ENCODE measurements at regions of chr4 and their contacts with region 1.

Region 1: DNA sequence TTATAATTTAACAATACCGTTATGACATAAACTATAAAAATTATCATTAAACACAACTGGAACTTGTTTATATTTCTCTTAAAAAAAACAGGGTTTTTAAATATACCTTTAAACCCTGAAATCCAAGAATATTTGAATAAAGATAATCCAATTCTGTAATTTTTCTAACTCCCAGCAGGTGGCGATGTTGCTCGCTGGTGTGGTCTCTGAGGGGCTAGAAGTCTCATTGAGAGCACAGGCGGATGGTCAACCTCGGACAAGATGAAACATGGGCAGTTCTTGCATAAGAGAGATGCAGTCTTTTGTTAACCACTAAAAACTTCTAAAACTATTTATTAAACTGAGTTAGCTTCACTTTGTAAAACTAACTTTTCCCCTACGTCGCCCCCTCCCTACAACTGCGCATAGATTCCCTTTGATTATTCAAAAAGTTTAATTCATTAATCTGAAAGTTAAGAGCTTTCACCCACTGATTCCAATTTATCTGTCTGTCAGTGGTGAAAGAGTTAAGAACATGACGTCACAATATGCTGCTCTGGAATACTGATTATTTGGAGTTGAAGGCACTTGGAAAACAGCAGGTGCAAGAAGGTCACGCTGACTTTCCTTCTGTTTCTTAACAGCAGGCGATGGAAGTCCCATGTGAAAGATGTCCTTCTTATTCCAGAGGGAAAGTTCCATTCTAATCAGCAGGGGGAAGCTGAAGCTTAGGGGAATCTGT is 29.5 kb downstream of the DMP1 start:
- DNase-seq: peak; percentile 28 to 49 (median 43)
- H3K4me3 ChIP-seq: no peak overlapping the region
- H3K4me3 Mint-ChIP-seq: no peak overlapping the region
- H3K27ac ChIP-seq: no peak overlapping the region
- H3K27ac Mint-ChIP-seq: no peak overlapping the region
- H3K4me1 ChIP-seq: no peaks in the 10 kb centered on the region
- H3K4me1 Mint-ChIP-seq: no peaks in the 10 kb centered on the region
- H3K27me3 ChIP-seq: no peaks in the 10 kb centered on the region
- H3K27me3 Mint-ChIP-seq: peaks cover 0 to 2% (median 1%) of the 10 kb centered on the region in 3 donors
- CTCF ChIP-seq: peak; percentile 94

Region 2: DNA sequence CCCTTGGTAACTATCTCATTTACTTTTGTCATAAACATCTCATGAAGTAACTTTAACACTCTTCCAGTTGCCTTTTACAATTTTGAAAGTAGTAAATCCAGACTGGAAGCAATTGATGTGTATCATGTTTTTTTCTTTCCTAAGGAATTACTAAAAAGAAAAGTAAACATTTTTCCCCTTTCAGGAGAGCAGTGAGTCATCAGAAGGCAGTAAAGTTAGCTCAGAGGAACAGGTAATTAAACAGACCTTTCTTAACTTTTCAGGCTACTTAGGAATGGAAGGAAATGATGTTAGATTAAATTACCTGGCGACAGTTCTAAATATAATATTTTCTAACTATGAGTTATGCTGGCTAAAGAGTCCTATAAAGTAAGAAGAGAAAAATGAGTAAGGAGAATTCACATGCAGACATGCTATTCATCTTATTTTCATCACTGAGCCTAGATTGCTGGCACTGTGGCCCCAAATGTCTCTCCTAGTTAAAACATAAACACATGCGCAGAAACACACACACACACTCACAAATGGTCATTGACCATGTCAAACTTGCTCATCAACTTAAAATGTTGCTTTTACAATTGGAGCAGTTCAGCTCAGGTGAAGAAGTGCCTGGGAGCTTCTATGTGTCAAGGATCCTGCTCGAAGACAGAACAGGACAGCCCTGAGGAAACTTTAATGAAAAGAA is 20.2 kb before region 1 on chr4:
- intact Hi-C with region 1: no loop called
- DNase-seq: no peak
- H3K4me3 ChIP-seq: no peak overlapping the region
- H3K4me3 Mint-ChIP-seq: no peak overlapping the region
- H3K27ac ChIP-seq: no peak overlapping the region
- H3K27ac Mint-ChIP-seq: no peak overlapping the region
- H3K4me1 ChIP-seq: no peaks in the 10 kb centered on the region
- H3K4me1 Mint-ChIP-seq: no peaks in the 10 kb centered on the region
- H3K27me3 ChIP-seq: no peaks in the 10 kb centered on the region
- H3K27me3 Mint-ChIP-seq: peaks cover 0 to 3% (median 3%) of the 10 kb centered on the region in 3 donors
- CTCF ChIP-seq: no peak

Region 3: GRCh38 chr4:87838890-87839591 is 159.4 kb after region 1 on chr4:
- intact Hi-C with region 1: loop called (anchors 5 to 10 kb)
- DNase-seq: peak; percentile 26 to 58 (median 50)
- H3K4me3 ChIP-seq: no peak overlapping the region
- H3K4me3 Mint-ChIP-seq: no peak overlapping the region
- H3K27ac ChIP-seq: no peak overlapping the region
- H3K27ac Mint-ChIP-seq: no peak overlapping the region
- H3K4me1 ChIP-seq: peaks cover 8 to 9% of the 10 kb centered on the region in 2 donors
- H3K4me1 Mint-ChIP-seq: peaks cover 12% of the 10 kb centered on the region
- H3K27me3 ChIP-seq: no peaks in the 10 kb centered on the region
- H3K27me3 Mint-ChIP-seq: peaks cover 0 to 10% (median 5%) of the 10 kb centered on the region in 3 donors
- CTCF ChIP-seq: peak; percentile 86

Region 4: DNA sequence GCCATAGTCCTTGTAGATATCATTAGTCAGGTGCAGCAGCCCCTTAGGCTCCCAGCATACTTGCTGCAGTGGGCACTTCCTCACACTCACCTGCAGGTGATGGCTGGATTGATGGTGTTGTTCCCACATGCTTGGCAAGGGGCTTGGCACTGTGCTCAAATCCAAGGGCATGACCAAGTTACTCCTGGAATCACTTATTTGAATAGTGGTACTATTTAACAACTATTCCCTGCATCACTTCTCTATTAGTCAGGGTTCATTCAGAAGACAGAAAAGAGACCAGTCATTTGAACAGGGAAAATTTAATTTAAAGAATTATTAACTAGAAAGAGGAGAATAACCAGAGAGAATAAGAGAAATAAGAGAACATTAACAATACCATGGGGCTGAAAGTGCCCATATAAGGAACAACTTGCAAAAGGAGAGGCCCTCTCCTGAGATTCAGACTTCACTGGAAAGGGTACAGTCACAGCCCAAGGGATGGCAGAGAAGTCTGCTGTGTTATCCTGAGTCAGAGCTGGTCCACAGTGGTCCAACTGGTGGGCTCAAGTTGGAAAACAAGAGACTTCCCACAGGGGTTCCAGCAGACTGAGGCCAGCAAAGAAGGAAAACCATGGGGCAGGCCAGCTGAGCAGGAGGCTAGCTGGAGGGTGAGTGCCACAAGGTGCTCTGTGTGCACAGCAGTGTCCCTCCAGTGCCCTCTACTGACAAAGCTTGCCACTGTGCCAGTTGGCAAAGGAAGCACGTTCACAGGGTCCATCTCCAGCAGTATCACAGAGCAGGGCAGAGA is 305.7 kb after region 1 on chr4:
- intact Hi-C with region 1: loop called (anchors 10 kb)
- DNase-seq: peak; percentile 20 to 51 (median 37)
- H3K4me3 ChIP-seq: no peak overlapping the region
- H3K4me3 Mint-ChIP-seq: no peak overlapping the region
- H3K27ac ChIP-seq: no peak overlapping the region
- H3K27ac Mint-ChIP-seq: peak overlapping the region in 1 of 7 donors; percentile 10
- H3K4me1 ChIP-seq: no peaks in the 10 kb centered on the region
- H3K4me1 Mint-ChIP-seq: peaks cover 2% of the 10 kb centered on the region
- H3K27me3 ChIP-seq: no peaks in the 10 kb centered on the region
- H3K27me3 Mint-ChIP-seq: peaks cover 0 to 2% (median 0%) of the 10 kb centered on the region in 3 donors
- CTCF ChIP-seq: peak; percentile 66

Region 5: GRCh38 chr4:88211473-88212252 is 532.1 kb after region 1 on chr4:
- intact Hi-C with region 1: loop called (anchors 5 to 10 kb)
- DNase-seq: peak; percentile 34 to 62 (median 43)
- H3K4me3 ChIP-seq: no peak overlapping the region
- H3K4me3 Mint-ChIP-seq: no peak overlapping the region
- H3K27ac ChIP-seq: no peak overlapping the region
- H3K27ac Mint-ChIP-seq: no peak overlapping the region
- H3K4me1 ChIP-seq: no peaks in the 10 kb centered on the region
- H3K4me1 Mint-ChIP-seq: peaks cover 6% of the 10 kb centered on the region
- H3K27me3 ChIP-seq: no peaks in the 10 kb centered on the region
- H3K27me3 Mint-ChIP-seq: peaks cover 0 to 4% (median 0%) of the 10 kb centered on the region in 3 donors
- CTCF ChIP-seq: peak; percentile 83

Measured in CD14-positive monocyte (primary cell).